ENCODE measurements at regions of chr17 and their contacts with region 1.

Region 1: GRCh38 chr17:10844621-10845387 is 6.9 kb upstream of the PIRT start:
- DNase-seq: peak; percentile 81
- ATAC-seq: peak; percentile 98

Region 2: GRCh38 chr17:10646392-10646990 is 198.3 kb before region 1 on chr17:
- intact Hi-C with region 1: loop called (anchors 10 kb)
- DNase-seq: peak; percentile 61
- ATAC-seq: peak; percentile 73

Region 3: GRCh38 chr17:10737168-10737622 is 107.6 kb before region 1 on chr17:
- intact Hi-C with region 1: loop called (anchors 5 kb)
- DNase-seq: peak; percentile 47
- ATAC-seq: peak; percentile 85

Region 4: GRCh38 chr17:11006530-11006929 is 161.7 kb after region 1 on chr17:
- intact Hi-C with region 1: no loop called
- DNase-seq: no peak
- ATAC-seq: no peak

Region 5: DNA sequence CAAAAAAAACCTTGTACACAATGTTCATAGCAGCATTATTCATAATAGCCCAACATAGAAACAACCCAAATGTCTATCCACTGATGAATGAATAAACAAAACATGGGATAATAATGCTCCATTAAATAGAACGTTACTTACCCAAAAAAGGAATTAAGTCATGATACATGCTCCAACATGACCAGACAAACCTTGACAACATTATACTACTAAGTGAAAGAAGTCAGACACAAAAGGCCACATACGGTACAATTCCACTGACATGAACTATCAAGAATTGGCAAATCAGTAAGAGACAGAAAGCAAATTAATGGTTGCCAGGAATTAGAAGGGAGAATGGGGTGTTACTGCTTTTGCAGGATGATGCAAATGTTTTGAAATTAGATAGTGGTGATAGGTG is 202.4 kb after region 1 on chr17:
- intact Hi-C with region 1: no loop called
- DNase-seq: no peak
- ATAC-seq: no peak